GM12878 (cell line): ENCODE measurements at regions of chr9 and their contacts with region 1.

Region 1: DNA sequence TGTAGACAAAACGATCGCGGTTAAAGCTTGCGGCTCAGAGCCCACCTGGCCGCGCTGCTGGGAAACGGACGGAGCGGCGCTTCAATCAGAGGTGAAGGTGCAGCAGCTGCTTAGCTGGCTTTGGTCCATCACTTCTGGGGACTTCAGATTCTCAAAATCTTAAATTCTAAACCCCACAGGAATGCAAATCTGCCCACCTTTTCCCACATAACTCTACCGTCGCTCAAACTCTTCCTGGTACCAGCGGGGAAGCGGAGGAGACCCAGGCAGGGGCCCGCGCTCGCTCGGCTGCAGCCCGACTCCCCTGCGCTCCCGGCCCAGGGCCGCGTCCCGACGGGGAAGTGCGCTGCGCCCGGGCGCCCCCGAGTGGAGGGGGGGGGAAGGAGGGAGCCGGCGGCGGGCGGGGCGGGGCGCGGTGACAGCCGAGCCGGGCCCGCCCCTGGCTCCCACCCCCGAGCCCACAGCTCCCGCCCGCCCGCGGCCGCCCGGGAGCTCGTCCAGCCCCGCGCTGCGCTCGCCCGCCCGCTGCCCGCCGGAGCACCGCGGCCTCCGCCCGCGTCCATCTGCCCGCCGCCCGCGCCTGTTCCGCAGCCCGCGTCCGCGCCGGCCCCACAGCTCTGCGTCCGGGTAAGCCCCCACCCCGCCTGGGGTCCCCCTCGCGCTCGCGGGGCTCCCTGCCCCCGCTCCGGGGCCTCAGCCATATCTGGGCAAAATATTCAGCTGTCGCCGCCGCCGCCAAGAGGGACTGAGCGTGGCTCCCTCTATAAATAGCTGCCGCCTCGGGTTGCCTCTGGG is at the start of gene TMOD1:
- DNase-seq: no peak
- ATAC-seq: peak; percentile 73
- H3K4me3 ChIP-seq: peak within 1 kb of the TSS; percentile 86
- H3K27ac ChIP-seq: peak within 1 kb of the TSS; percentile 70
- H3K4me1 ChIP-seq: peaks cover 28% of the 10 kb centered on the region
- H3K27me3 ChIP-seq: no peaks in the 10 kb centered on the region
- CTCF ChIP-seq: peak; percentile 17 to 37 (median 27); a peak in 3 of 6 replicates
- EP300 ChIP-seq: no peak
- POLR2A ChIP-seq: peak; percentile 45; the same call in 1 of the 2 replicates
- RAD21 ChIP-seq: peak; percentile 39; the same call in 1 of the 2 replicates
- polyA plus RNA-seq, gene TMOD1: 11.1 to 16.9 TPM

Region 2: GRCh38 chr9:96418074-96418809 is 1083.1 kb before region 1 on chr9 and contains the start of gene ZNF367:
- CTCF ChIA-PET with region 1: no interaction called
- POLR2A ChIA-PET with region 1: no interaction called
- RAD21 ChIA-PET with region 1: no interaction called
- SMC1A ChIA-PET with region 1: no interaction called
- in situ Hi-C with region 1: loop called (anchors 10 kb)
- intact Hi-C with region 1: no loop called
- DNase-seq: peak; percentile 81
- ATAC-seq: peak; percentile 84
- H3K4me3 ChIP-seq: peak within 1 kb of the TSS; percentile 91
- H3K27ac ChIP-seq: peak within 1 kb of the TSS; percentile 90
- H3K4me1 ChIP-seq: peaks cover 25% of the 10 kb centered on the region
- H3K27me3 ChIP-seq: no peaks in the 10 kb centered on the region
- CTCF ChIP-seq: no peak
- EP300 ChIP-seq: peak in 1 of 2 experiments; percentile 33; a peak in 1 of 4 replicates
- POLR2A ChIP-seq: peak; percentile 84
- RAD21 ChIP-seq: no peak
- polyA plus RNA-seq, gene ZNF367: 3.9 to 5.5 TPM

Region 3: DNA sequence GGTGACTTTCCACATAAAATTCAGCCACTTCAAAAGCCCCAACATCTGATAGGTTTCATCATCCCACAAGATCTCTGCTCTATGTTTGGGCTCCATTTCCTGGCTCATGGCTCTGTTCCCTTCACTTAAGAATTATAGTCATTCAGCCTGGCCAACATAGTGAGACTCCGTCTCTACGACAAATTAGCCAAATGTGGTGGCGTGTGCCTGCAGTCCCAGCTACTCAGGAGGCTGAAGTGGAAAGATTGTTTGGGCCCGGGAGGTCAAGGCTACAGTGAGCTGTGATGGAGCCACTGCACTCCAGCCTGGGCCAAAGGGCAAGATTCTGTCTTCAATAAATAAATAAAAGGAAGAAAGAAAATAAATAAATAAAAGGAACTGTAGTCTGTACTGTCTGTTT is 404.6 kb before region 1 on chr9:
- CTCF ChIA-PET with region 1: no interaction called
- POLR2A ChIA-PET with region 1: no interaction called
- RAD21 ChIA-PET with region 1: no interaction called
- SMC1A ChIA-PET with region 1: no interaction called
- in situ Hi-C with region 1: no loop called
- intact Hi-C with region 1: no loop called
- DNase-seq: no peak
- ATAC-seq: no peak
- H3K4me3 ChIP-seq: no peak overlapping the region
- H3K27ac ChIP-seq: no peak overlapping the region
- H3K4me1 ChIP-seq: no peaks in the 10 kb centered on the region
- H3K27me3 ChIP-seq: no peaks in the 10 kb centered on the region; a peak in 1 of 4 replicates
- CTCF ChIP-seq: no peak
- EP300 ChIP-seq: no peak
- POLR2A ChIP-seq: no peak
- RAD21 ChIP-seq: no peak

Region 4: DNA sequence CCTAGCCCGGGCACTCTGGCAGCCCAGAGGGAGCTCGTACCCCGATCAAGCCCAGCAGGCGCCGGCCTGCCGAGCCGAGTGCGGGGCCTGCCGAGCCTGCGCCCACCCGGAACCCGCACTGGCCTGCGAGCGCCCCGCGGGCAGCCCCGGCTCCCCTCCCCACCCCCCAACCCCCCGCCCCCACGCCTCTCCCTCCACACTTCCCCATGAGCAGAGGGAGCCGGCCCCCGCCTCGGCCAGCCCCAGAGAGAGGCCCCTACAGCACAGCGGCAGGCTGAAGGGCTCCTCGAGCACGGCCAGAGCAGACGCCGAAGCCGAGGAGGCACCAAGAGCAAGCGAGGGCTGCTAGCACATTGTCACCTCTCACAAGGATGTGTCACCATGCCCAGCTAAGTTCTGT is 230.1 kb before region 1 on chr9:
- CTCF ChIA-PET with region 1: no interaction called
- POLR2A ChIA-PET with region 1: no interaction called
- RAD21 ChIA-PET with region 1: no interaction called
- SMC1A ChIA-PET with region 1: no interaction called
- in situ Hi-C with region 1: no loop called
- intact Hi-C with region 1: no loop called
- DNase-seq: no peak
- ATAC-seq: no peak
- H3K4me3 ChIP-seq: no peak overlapping the region
- H3K27ac ChIP-seq: no peak overlapping the region
- H3K4me1 ChIP-seq: no peaks in the 10 kb centered on the region
- H3K27me3 ChIP-seq: no peaks in the 10 kb centered on the region
- CTCF ChIP-seq: no peak
- EP300 ChIP-seq: no peak
- POLR2A ChIP-seq: no peak
- RAD21 ChIP-seq: no peak

Region 5: DNA sequence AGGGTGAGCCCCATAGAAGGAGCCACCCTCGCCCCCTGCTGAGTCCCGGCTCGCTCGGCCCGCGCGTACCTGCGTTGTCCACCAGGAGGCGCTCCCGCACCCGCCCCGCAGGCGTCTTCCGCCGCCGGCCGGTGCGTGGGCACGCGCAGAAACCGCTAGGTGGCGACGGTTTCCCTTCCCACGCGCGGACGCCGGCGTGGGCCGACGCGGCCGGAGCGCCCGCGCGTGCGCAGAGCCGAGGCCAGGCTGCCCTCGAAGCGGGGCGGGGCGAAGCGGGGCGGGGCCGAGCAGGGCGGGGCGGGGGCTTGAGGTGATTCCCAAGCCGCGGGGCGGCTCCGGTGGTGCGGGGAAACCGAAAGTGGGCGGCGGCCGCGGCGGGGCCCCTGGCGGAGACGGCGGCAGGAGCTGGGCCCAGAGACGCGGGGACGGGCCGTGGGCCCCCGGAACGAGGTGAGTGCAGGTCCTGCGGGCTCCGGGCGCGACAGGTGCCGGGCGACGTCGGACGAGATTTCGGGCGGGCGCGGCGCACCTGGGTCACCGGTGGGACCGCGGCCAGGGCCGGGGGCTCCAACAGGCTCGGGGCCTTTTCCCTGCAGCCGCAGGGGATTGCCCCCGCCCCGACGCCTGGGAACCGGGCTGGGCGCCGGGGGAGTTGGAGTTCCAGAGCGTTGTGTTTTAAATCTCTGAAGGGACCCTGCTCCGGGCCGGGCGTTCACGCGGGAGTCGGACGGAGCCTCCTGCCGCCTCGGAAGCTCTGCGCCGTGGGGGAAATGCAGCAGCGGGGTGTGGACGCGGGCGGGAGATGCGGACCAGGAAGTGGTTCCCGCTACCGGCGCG is 89.4 kb before region 1 on chr9 and contains the start of gene TDRD7:
- CTCF ChIA-PET with region 1: interaction called, 30 read pairs
- POLR2A ChIA-PET with region 1: interaction called, 7 read pairs
- RAD21 ChIA-PET with region 1: interaction called, 21 read pairs
- SMC1A ChIA-PET with region 1: interaction called, 8 read pairs
- in situ Hi-C with region 1: no loop called
- intact Hi-C with region 1: loop called (anchors 5 kb)
- DNase-seq: peak; percentile 50
- ATAC-seq: peak; percentile 85
- H3K4me3 ChIP-seq: peak within 1 kb of the TSS; percentile 86
- H3K27ac ChIP-seq: peak within 1 kb of the TSS; percentile 23
- H3K4me1 ChIP-seq: peaks cover 3% of the 10 kb centered on the region; the same call in 1 of the 2 replicates
- H3K27me3 ChIP-seq: no peaks in the 10 kb centered on the region; a peak in 1 of 4 replicates
- CTCF ChIP-seq: peak; percentile 96 to 100 (median 99); a peak in 5 of 6 replicates
- EP300 ChIP-seq: peak; percentile 16 to 49; a peak in 1 of 4 replicates
- POLR2A ChIP-seq: peak; percentile 69
- RAD21 ChIP-seq: peak; percentile 71
- polyA plus RNA-seq, gene TDRD7: 5.7 to 8.3 TPM

Region 6: DNA sequence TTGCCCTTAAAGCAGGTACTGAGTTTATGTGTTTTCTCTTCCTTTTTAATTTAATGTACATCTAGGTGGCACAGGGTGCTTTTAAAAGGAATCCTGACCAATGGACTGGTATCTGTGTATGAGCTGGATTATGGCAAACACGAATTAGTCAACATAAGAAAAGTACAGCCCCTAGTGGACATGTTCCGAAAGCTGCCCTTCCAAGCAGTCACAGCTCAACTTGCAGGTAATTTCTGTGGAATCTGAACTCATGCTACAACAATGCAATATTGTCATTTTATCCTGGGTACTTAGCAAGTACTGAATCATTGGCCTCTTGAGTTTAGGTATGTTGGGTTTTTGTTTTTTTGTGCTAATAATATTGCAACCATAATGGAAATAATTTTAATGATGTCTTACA is 14.3 kb before region 1 on chr9:
- CTCF ChIA-PET with region 1: interaction called, 21 read pairs
- POLR2A ChIA-PET with region 1: interaction called, 4 read pairs
- RAD21 ChIA-PET with region 1: interaction called, 6 read pairs
- SMC1A ChIA-PET with region 1: interaction called, 23 read pairs
- in situ Hi-C with region 1: no loop called
- intact Hi-C with region 1: no loop called
- DNase-seq: no peak
- ATAC-seq: peak; percentile 42; the same call in 2 of the 3 replicates
- H3K4me3 ChIP-seq: no peak overlapping the region
- H3K27ac ChIP-seq: no peak overlapping the region
- H3K4me1 ChIP-seq: peaks cover 5% of the 10 kb centered on the region; the same call in 1 of the 2 replicates
- H3K27me3 ChIP-seq: no peaks in the 10 kb centered on the region
- CTCF ChIP-seq: 0 out of 6 replicates have a peak, but pooled peaks of 1 of the 3 experiments have one; percentile 17
- EP300 ChIP-seq: no peak
- POLR2A ChIP-seq: no peak
- RAD21 ChIP-seq: no peak

Region 7: GRCh38 chr9:97529363-97530076 is 28.1 kb after region 1 on chr9:
- CTCF ChIA-PET with region 1: interaction called, 7 read pairs
- POLR2A ChIA-PET with region 1: interaction called, 3 read pairs
- RAD21 ChIA-PET with region 1: interaction called, 29 read pairs
- SMC1A ChIA-PET with region 1: interaction called, 9 read pairs
- in situ Hi-C with region 1: no loop called
- intact Hi-C with region 1: no loop called
- DNase-seq: peak; percentile 78
- ATAC-seq: peak; percentile 94
- H3K4me3 ChIP-seq: no peak overlapping the region; the same call in 1 of the 2 replicates
- H3K27ac ChIP-seq: peak overlapping the region; percentile 64
- H3K4me1 ChIP-seq: peaks cover 29% of the 10 kb centered on the region
- H3K27me3 ChIP-seq: no peaks in the 10 kb centered on the region
- CTCF ChIP-seq: no peak
- EP300 ChIP-seq: no peak; a peak in 1 of 4 replicates
- POLR2A ChIP-seq: 0 out of 2 replicates have a peak, but pooled peaks have one; percentile 27
- RAD21 ChIP-seq: no peak

Region 8: DNA sequence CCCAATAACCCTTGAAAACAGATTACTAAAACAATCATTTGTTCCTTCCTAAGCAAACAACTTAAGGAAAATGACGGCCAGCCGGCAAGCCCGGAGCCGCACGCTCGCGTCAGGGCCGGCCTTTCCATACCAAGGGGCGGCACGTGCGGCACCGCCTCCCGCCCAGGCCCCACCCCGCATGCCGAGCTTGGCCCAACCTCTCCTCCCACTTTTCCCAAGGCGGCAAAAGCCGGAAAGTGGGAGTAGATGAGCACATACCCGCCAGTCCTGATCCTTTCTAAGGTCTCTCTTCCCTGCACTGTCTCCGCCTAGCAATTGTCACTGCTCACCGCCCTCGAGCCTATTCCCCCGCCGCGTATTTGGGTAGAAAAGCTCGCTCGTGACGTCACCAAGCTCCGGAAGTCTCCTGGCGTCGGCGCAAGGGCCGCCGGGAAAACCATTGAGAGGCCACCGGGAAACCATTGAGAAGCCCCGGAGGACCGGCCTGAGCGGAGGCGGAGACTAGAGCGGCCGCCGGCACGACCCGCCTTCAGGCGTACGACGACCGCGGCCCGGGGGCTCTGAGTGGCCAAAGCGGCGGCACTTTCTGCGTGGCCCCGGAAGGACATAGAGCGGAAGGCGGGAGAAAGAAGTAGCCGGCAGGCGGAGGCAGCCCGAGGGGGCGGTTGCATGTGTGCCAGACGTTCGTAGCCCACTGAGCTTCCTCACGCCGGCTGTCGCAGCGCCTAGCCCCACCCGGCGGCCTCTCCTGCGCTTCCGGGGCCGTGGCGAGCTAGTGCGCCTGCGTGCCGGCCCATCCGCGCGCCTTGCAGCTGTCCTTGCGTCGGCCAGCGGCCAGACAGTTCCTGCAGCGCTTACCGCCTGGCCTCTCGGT is 131.8 kb after region 1 on chr9 and contains the starts of genes NCBP1 and TSTD2:
- CTCF ChIA-PET with region 1: interaction called, 13 read pairs
- POLR2A ChIA-PET with region 1: interaction called, 20 read pairs
- RAD21 ChIA-PET with region 1: interaction called, 22 read pairs
- SMC1A ChIA-PET with region 1: interaction called, 4 read pairs
- in situ Hi-C with region 1: no loop called
- intact Hi-C with region 1: no loop called
- DNase-seq: peak; percentile 92
- ATAC-seq: peak; percentile 90
- H3K4me3 ChIP-seq: peak within 1 kb of the TSS; percentile 96
- H3K27ac ChIP-seq: peak within 1 kb of the TSS; percentile 93
- H3K4me1 ChIP-seq: peaks cover 5% of the 10 kb centered on the region
- H3K27me3 ChIP-seq: no peaks in the 10 kb centered on the region
- CTCF ChIP-seq: no peak
- EP300 ChIP-seq: peak in 1 of 2 experiments; percentile 25; a peak in 1 of 4 replicates
- POLR2A ChIP-seq: peak; percentile 95
- RAD21 ChIP-seq: no peak
- polyA plus RNA-seq, gene NCBP1: 14.7 to 21.5 TPM
- polyA plus RNA-seq, gene TSTD2: 5.0 to 5.3 TPM